Vagina (tissue), 2 donors: ENCODE measurements at regions of chr2 and their contacts with region 1.

Region 1: DNA sequence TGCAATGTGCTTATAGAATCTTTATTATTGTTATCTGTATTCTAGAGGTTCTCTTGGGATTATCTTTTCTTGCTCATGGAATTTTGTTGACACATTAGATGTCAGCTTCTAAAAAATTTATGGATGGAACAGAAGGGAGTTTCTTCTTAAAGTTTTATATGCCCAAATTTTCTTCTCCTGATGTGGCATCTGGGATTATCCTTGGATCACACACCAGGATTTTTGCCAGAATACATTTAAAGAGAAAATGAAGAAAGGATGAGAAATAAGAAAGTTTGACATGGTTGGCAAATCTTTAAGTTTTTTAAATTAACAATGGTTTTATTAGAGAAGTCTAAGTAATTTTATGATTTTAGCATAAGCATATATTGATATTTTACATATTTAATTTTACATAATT is 706.7 kb upstream of the TMEFF2 start:
- DNase-seq: no peak
- H3K4me3 ChIP-seq: no peak overlapping the region
- H3K27ac ChIP-seq: no peak overlapping the region
- H3K4me1 ChIP-seq: no peaks in the 10 kb centered on the region
- H3K27me3 ChIP-seq: no peaks in the 10 kb centered on the region
- CTCF ChIP-seq: no peak
- POLR2A ChIP-seq: no peak

Region 2: GRCh38 chr2:192729369-192729768 is 172.1 kb before region 1 on chr2:
- intact Hi-C with region 1: loop called (anchors 5 kb)
- DNase-seq: no peak
- H3K4me3 ChIP-seq: no peak overlapping the region
- H3K27ac ChIP-seq: no peak overlapping the region
- H3K4me1 ChIP-seq: no peaks in the 10 kb centered on the region
- H3K27me3 ChIP-seq: no peaks in the 10 kb centered on the region
- CTCF ChIP-seq: no peak
- POLR2A ChIP-seq: no peak